ENCODE measurements at regions of chr21 and their contacts with region 1.

Region 1: DNA sequence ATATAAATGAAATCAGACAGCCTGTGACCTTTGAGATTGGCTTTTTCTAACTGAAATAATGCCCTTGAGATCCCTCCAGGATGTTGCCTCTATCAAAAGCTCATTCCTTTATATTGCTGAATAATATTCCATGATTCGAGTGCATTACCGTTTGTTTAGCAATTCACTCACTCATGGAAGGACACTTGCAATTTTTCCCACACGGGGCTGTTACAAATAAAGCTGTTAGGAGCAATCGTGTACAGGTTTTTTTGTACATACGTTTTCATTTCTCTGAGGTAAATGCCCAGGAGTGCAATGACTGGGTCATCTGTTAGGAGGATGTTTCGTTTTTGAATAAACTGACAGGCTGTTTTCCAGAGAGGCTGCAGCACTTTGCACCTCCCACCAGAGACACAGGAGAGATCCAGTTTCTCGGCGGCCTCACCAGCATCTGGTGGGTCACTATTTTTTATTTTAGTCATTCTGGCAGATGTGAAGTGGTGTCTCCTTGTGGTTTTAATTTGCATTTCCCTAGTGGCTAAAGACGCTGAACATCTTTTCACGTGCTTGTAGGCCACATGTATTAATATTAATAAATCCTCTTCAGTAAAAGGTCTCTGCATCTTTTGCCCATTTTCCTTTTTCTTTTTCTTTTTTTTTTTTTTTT is 11.0 kb downstream of the PRDM15 start:
- DNase-seq: no peak
- ATAC-seq: peak; percentile 81
- H3K4me3 Mint-ChIP-seq: peak overlapping the region; percentile 64
- H3K27ac Mint-ChIP-seq: peak overlapping the region; percentile 50
- H3K4me1 Mint-ChIP-seq: peaks cover 64% of the 10 kb centered on the region
- H3K27me3 Mint-ChIP-seq: no peaks in the 10 kb centered on the region
- CTCF ChIP-seq: no peak

Region 2: DNA sequence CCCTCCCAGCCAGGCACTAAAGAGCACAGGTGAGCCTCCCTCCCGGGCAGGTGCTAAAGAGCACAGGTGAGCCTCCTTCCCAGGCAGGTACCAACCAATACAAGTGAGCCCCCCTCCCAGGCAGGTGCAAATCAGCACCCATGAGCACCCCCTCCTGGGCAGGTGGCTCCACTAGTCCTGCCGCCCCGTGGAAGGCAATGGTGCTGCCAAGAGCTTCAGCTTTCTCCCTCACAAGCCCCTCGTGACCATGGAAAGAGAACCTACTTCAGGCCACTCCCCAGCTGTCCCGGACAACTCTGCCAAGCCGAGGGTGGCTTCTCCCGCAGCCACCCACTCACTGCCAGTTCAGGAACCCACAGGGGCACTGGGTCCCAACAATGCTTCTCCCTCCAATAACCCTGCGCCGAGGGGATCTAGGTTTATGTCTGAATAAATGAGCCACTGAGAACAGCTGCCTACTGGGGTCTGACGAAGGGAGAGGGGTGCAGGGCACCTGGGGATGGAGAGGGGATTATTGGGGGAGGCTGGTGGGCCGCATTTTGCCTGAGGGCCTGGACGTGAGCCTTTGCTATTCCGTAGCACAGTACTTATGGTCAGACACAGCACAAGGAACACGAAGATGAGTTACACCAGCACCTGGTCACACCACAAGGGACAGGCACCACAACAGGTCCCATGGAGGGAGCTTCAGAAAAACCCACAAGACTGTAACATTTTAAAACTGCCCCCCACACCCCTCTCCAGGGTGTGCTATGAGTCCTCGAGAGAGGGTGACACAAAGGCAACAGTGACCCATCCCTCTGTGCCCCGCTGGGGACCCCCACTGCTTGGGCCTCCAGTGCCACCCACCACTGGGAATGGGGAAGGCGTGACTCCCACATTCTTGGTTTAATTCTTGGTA is 35.3 kb before region 1 on chr21:
- CTCF ChIA-PET with region 1: no interaction called
- POLR2A ChIA-PET with region 1: interaction called, 7 read pairs
- intact Hi-C with region 1: loop called (anchors 2 kb)
- DNase-seq: no peak
- ATAC-seq: peak; percentile 67
- H3K4me3 Mint-ChIP-seq: peak overlapping the region; percentile 44
- H3K27ac Mint-ChIP-seq: peak overlapping the region; percentile 20
- H3K4me1 Mint-ChIP-seq: peaks cover 45% of the 10 kb centered on the region
- H3K27me3 Mint-ChIP-seq: no peaks in the 10 kb centered on the region
- CTCF ChIP-seq: no peak

Region 3: DNA sequence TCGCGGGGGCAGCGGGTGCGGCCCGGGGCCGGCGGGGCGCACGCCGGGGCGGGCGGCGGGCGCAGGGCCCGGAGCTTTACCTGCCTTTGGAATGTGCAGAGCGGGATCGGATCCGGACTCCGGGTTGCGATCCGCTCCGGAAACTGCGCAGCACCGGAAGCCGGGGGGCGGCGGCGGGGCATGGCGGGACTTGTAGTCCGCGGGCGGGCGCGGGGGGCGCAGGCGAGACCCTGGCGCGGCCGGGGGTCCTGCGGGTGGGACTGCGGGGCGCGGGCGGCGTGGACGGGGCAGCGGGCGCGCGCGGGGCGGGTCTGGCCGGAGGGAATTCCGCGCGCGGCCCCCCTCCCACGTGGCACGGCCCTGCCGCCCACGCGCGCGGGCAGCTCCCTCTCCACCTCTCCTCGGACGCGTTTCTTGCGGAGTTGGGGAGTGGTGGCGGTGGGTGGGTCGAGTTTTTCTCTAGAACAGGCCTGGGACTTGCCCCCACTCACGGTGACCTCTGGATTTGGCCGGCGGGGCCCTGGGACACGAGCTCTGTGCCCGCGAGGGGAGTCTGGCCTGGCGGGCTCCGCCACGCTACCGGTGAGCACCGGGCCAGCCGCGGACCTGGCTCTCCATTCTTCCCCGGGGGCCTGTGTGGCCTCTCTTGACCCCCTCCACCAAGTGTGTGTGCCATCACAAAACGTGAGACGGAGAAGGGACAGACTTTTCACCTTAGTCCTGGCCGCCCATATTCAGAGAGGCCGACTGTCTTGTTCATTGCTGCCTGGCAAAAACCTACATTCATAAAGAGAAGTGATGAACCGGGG is 11.2 kb after region 1 on chr21 and contains the start of gene PRDM15:
- CTCF ChIA-PET with region 1: no interaction called
- POLR2A ChIA-PET with region 1: interaction called, 8 read pairs
- intact Hi-C with region 1: loop called (anchors 1 kb)
- DNase-seq: peak; percentile 83
- ATAC-seq: peak; percentile 63
- H3K4me3 Mint-ChIP-seq: peak within 1 kb of the TSS; percentile 90
- H3K27ac Mint-ChIP-seq: peak within 1 kb of the TSS; percentile 93
- H3K4me1 Mint-ChIP-seq: peaks cover 39% of the 10 kb centered on the region
- H3K27me3 Mint-ChIP-seq: no peaks in the 10 kb centered on the region
- CTCF ChIP-seq: no peak
- total RNA-seq, gene PRDM15: 12.8 and 13.6 TPM in 2 replicates

Region 4: GRCh38 chr21:42298237-42298636 is 430.1 kb after region 1 on chr21:
- CTCF ChIA-PET with region 1: no interaction called
- POLR2A ChIA-PET with region 1: interaction called, 10 read pairs
- intact Hi-C with region 1: no loop called
- DNase-seq: no peak
- ATAC-seq: no peak
- H3K4me3 Mint-ChIP-seq: no peak overlapping the region
- H3K27ac Mint-ChIP-seq: no peak overlapping the region
- H3K4me1 Mint-ChIP-seq: no peaks in the 10 kb centered on the region
- H3K27me3 Mint-ChIP-seq: no peaks in the 10 kb centered on the region
- CTCF ChIP-seq: no peak

Measured in activated B cell treated with CpG ODN at 0.5 μM for 24 hours (primary cell).